Heart left ventricle (tissue), 16 donors: ENCODE measurements at regions of chrX and their contacts with region 1.

Region 1: GRCh38 chrX:23907498-23908218 is at the starts of genes APOO and CXorf58:
- DNase-seq: peak; percentile 90 to 96 (median 92)
- ATAC-seq: peak; percentile 91 to 98 (median 96)
- H3K4me3 ChIP-seq: peak within 1 kb of the TSS; percentile 32 to 92 (median 68)
- H3K27ac ChIP-seq: peak within 1 kb of the TSS; percentile 80 to 96 (median 89)
- H3K4me1 ChIP-seq: peaks cover 0 to 16% (median 2%) of the 10 kb centered on the region in 12 donors
- H3K27me3 ChIP-seq: peaks cover 0 to 24% (median 0%) of the 10 kb centered on the region in 9 donors
- CTCF ChIP-seq: peak; percentile 66 to 90 (median 72)
- POLR2A ChIP-seq: peak in 1 of 2 donors; percentile 45
- total RNA-seq, gene APOO: 41.0 to 113 (median 92.2) TPM
- total RNA-seq, gene CXorf58: 0.16 to 0.30 (median 0.24) TPM in 4 of 9 donors, not detected in the others

Region 2: GRCh38 chrX:23667239-23668177 is 240.2 kb before region 1 on chrX and contains the start of gene PRDX4:
- intact Hi-C with region 1: loop called in 1 of 10 experiments (anchors 5 kb)
- DNase-seq: peak; percentile 90 to 95 (median 93)
- ATAC-seq: peak; percentile 93 to 99 (median 98)
- H3K4me3 ChIP-seq: peak within 1 kb of the TSS; percentile 20 to 95 (median 68)
- H3K27ac ChIP-seq: peak within 1 kb of the TSS in 11 of 12 donors; percentile 63 to 85 (median 76)
- H3K4me1 ChIP-seq: peaks cover 0 to 15% (median 2%) of the 10 kb centered on the region in 12 donors
- H3K27me3 ChIP-seq: no peaks in the 10 kb centered on the region
- CTCF ChIP-seq: peak in 1 of 12 donors; percentile 11
- POLR2A ChIP-seq: peak in 1 of 2 donors; percentile 48
- total RNA-seq, gene PRDX4: 31.3 to 85.1 (median 37.5) TPM

Region 3: DNA sequence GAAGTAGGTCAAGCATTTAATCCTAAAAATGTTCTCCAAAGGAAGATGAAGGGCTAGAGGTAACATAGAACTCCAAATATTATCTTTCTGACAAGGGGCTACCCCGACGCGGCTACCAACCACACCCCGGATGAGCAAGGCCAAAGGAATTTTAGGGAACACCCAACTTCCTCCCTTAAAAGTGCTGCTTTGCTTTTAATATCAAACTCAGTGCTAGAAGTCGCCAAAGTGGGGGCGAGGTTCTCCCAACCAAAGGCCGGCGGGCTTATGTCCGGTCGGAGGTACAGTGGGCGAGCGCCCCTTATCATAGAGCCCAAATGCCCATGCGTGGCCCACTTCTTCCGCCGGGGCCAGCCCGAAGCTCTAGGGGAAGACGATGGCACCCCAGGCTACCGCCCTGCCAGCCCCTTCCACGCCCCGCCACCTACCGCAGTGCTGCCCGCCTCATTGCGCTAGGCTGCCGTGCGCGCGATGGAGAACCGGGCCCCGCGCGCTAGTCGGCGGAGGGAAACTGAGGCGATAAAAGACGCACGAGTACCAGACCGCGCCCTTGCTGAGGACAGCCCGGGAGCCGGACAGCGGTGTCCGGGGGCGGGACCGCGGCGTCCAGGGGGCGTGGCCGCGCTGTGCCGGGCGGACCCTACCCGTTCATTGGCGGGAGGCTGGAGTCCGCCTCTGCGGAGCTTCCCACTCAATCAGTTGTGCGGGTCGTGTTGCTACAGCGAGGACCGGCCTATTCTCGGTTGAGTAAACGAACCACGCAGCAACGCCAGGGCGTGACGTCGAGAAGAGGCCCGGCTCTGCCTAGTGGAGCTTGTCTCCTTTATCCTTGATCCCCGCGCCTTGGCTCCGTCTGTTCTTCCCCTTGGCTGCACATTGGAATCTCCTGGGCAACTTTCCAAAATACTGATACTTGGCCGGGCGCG is 164.7 kb before region 1 on chrX and contains the start of gene ACOT9:
- intact Hi-C with region 1: loop called in 2 of 10 experiments (anchors 2 to 10 kb)
- DNase-seq: peak; percentile 90 to 97 (median 94)
- ATAC-seq: peak; percentile 97 to 99 (median 98)
- H3K4me3 ChIP-seq: peak within 1 kb of the TSS; percentile 61 to 98 (median 79)
- H3K27ac ChIP-seq: peak within 1 kb of the TSS; percentile 92 to 100 (median 94)
- H3K4me1 ChIP-seq: peaks cover 0 to 15% (median 4%) of the 10 kb centered on the region in 12 donors
- H3K27me3 ChIP-seq: peaks cover 0 to 2% (median 0%) of the 10 kb centered on the region in 9 donors
- CTCF ChIP-seq: no peak
- POLR2A ChIP-seq: peak; percentile 16 to 78
- total RNA-seq, gene ACOT9: 45.3 to 81.1 (median 59.3) TPM

Region 4: DNA sequence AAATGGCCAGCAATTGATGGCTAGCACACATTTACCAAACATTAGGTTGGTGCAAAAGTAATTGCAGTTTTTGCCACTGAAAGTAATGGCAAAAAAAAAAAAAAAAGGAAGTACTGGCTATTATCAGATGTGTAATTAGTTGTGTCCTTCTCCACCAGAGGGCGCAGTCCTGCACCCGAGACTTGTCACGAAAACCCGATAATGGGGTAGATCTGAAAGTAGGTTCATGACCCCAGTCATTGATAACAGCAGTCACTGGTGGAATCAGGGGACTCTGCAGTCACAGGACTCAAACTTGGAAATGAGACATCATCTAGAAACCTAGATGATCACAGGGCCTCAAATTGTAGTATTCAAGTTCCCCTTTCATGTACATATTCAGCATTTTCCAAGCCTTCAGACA is 151.5 kb before region 1 on chrX:
- intact Hi-C with region 1: loop called in 5 of 10 experiments (anchors 1 to 10 kb)
- DNase-seq: peak in 4 of 5 donors; percentile 39 to 62 (median 47)
- ATAC-seq: peak in 1 of 4 donors; percentile 13
- H3K4me3 ChIP-seq: no peak overlapping the region
- H3K27ac ChIP-seq: no peak overlapping the region
- H3K4me1 ChIP-seq: peaks cover 0 to 11% (median 0%) of the 10 kb centered on the region in 12 donors
- H3K27me3 ChIP-seq: no peaks in the 10 kb centered on the region
- CTCF ChIP-seq: peak in 11 of 12 donors; percentile 31 to 65 (median 52)
- POLR2A ChIP-seq: no peak

Region 5: GRCh38 chrX:24024819-24025740 is 117.4 kb after region 1 on chrX:
- intact Hi-C with region 1: loop called in 5 of 10 experiments (anchors 1 to 10 kb)
- DNase-seq: peak; percentile 89 to 93 (median 91)
- ATAC-seq: peak; percentile 93 to 97 (median 96)
- H3K4me3 ChIP-seq: peak overlapping the region; percentile 51 to 99 (median 82)
- H3K27ac ChIP-seq: peak overlapping the region; percentile 90 to 97 (median 96)
- H3K4me1 ChIP-seq: peaks cover 0 to 13% (median under 1%) of the 10 kb centered on the region in 12 donors
- H3K27me3 ChIP-seq: peaks cover 0 to 46% (median 0%) of the 10 kb centered on the region in 9 donors
- CTCF ChIP-seq: peak in 6 of 12 donors; percentile 19 to 40 (median 30)
- POLR2A ChIP-seq: peak in 1 of 2 donors; percentile 84

Region 6: DNA sequence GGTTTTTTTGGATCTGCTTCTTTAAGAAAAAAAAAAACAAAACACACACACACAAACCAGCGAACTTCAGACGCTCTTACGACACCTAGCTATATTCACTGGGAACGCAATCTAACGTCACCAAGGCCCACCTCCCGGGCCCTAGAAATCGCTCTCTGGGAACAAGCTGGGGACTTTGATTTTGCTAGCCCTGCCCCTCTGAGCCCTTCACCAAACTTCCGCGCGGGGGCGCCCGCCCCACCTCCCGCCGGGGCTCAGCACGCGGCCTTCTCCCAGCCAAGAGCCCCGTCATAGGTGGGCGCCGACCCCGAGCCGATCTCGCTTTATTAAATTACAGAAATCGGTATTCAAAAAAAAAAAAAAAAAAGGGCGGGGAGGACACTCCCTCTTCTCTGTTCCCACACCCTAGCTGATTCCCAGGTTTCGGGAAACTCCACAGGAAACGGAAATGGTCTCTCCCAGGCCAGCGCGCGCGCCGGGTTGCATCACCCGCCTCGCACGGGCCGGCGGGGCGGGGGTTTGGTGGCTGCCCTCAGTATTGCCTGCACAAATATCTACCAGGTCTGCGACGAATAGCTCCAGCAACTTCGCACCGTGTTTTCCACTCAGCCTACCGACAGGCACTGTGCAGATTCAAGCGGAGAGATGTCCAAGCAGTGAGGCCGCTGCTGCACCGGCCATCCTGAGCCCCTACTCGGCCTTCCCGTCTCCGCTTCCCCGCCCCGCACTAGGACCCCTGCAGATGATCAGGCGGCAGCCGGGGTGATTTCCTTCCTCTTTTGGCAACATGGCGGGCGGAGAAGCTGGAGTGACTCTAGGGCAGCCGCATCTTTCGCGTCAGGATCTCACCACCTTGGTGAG is 146.8 kb after region 1 on chrX and contains the start of gene EIF2S3:
- intact Hi-C with region 1: loop called in 9 of 10 experiments (anchors 1 to 10 kb)
- DNase-seq: peak; percentile 86 to 93 (median 87)
- ATAC-seq: peak; percentile 97 to 99 (median 98)
- H3K4me3 ChIP-seq: peak within 1 kb of the TSS in 6 of 12 donors; percentile 57 to 86 (median 77)
- H3K27ac ChIP-seq: peak within 1 kb of the TSS; percentile 88 to 98 (median 93)
- H3K4me1 ChIP-seq: peaks cover 0 to 11% (median 0%) of the 10 kb centered on the region in 12 donors
- H3K27me3 ChIP-seq: peaks cover 0 to 5% (median 0%) of the 10 kb centered on the region in 9 donors
- CTCF ChIP-seq: peak; percentile 47 to 89 (median 72)
- POLR2A ChIP-seq: peak in 1 of 2 donors; percentile 13
- total RNA-seq, gene EIF2S3: 60.0 to 126 (median 83.0) TPM